Endothelial cell of umbilical vein (primary cell): ENCODE measurements at regions of chr7 and their contacts with region 1.

Region 1: GRCh38 chr7:129218514-129219062 is 6.2 kb upstream of the AHCYL2 start:
- DNase-seq: peak; percentile 80
- H3K4me3 ChIP-seq: no peak overlapping the region
- H3K27ac ChIP-seq: no peak overlapping the region
- H3K4me1 ChIP-seq: peaks cover 7% of the 10 kb centered on the region
- H3K27me3 ChIP-seq: peaks cover 0 to 2% of the 10 kb centered on the region in 2 experiments
- CTCF ChIP-seq: peak; percentile 79 to 84
- POLR2A ChIP-seq: no peak

Region 2: DNA sequence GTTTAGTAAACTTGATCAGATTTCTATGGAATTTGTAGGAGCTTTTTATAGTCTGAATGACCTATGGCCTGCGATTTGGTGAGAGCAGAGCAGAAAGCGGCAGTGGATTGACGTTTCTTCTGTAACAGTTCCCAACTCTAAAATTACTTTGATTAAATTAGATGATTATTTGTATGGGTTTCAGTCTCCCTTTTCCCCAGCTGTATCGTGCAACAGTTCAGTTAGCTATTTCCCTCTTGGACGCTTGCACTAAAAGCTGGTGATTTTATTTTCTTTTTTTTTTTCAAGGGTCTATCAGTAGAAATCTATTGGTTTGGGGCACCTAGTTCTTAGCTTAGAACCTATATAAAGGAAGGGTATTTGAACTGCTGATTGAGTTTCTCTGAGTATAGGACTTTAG is 13.1 kb after region 1 on chr7:
- CTCF ChIA-PET with region 1: interaction called, 14 read pairs
- POLR2A ChIA-PET with region 1: no interaction called
- dilution Hi-C with region 1: no loop called
- intact Hi-C with region 1: no loop called
- DNase-seq: no peak
- H3K4me3 ChIP-seq: no peak overlapping the region
- H3K27ac ChIP-seq: no peak overlapping the region
- H3K4me1 ChIP-seq: no peaks in the 10 kb centered on the region
- H3K27me3 ChIP-seq: no peaks in the 10 kb centered on the region
- CTCF ChIP-seq: no peak
- POLR2A ChIP-seq: no peak

Region 3: GRCh38 chr7:129285111-129285510 is 66.5 kb after region 1 on chr7:
- CTCF ChIA-PET with region 1: interaction called, 23 read pairs
- POLR2A ChIA-PET with region 1: no interaction called
- dilution Hi-C with region 1: no loop called
- intact Hi-C with region 1: no loop called
- DNase-seq: no peak
- H3K4me3 ChIP-seq: no peak overlapping the region
- H3K27ac ChIP-seq: no peak overlapping the region
- H3K4me1 ChIP-seq: peaks cover 21% of the 10 kb centered on the region
- H3K27me3 ChIP-seq: no peaks in the 10 kb centered on the region
- CTCF ChIP-seq: no peak
- POLR2A ChIP-seq: no peak

Region 4: GRCh38 chr7:129332284-129333035 is 113.9 kb after region 1 on chr7:
- CTCF ChIA-PET with region 1: interaction called, 15 read pairs
- POLR2A ChIA-PET with region 1: no interaction called
- dilution Hi-C with region 1: no loop called
- intact Hi-C with region 1: no loop called
- DNase-seq: peak; percentile 58
- H3K4me3 ChIP-seq: no peak overlapping the region
- H3K27ac ChIP-seq: peak overlapping the region; percentile 38
- H3K4me1 ChIP-seq: peaks cover 5% of the 10 kb centered on the region
- H3K27me3 ChIP-seq: no peaks in the 10 kb centered on the region
- CTCF ChIP-seq: no peak
- POLR2A ChIP-seq: no peak

Region 5: DNA sequence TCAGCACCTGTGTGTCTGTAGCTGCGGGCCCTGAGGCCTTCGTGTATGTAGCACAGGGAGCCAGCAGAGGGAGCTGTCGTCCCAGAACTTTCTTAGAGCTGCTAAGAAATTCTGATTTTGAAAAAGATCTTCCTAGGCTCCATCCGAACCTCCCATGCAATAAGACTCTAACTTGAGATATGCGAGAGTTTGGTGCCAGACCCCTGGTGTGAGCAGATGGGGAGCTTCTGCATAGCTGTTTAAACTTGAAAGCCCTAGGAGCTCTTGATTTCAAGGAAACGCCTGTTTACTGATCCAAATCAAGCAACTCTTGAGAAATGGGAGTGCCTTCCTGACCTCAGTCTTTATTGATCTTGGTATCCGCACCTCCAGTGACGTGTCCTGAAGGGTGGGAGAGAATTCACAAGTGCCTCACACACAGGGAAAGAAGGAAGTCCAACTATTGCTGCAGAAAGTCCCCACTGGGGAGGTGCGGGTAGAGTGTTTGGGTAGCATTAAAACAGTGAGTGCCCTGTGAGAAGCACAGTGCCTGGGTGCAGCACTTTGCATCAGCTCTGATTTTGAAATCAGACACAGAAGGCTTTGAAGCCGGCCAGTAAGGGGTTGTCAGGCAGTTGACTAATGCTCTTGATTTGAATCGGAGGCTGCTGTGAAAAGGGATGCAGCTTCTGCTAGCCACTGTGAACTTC is 149.3 kb after region 1 on chr7:
- CTCF ChIA-PET with region 1: interaction called, 45 read pairs
- POLR2A ChIA-PET with region 1: no interaction called
- dilution Hi-C with region 1: no loop called
- intact Hi-C with region 1: loop called (anchors 1 kb)
- DNase-seq: peak; percentile 77
- H3K4me3 ChIP-seq: no peak overlapping the region
- H3K27ac ChIP-seq: no peak overlapping the region
- H3K4me1 ChIP-seq: peaks cover 4% of the 10 kb centered on the region
- H3K27me3 ChIP-seq: no peaks in the 10 kb centered on the region
- CTCF ChIP-seq: peak; percentile 85 to 89
- POLR2A ChIP-seq: no peak

Region 6: DNA sequence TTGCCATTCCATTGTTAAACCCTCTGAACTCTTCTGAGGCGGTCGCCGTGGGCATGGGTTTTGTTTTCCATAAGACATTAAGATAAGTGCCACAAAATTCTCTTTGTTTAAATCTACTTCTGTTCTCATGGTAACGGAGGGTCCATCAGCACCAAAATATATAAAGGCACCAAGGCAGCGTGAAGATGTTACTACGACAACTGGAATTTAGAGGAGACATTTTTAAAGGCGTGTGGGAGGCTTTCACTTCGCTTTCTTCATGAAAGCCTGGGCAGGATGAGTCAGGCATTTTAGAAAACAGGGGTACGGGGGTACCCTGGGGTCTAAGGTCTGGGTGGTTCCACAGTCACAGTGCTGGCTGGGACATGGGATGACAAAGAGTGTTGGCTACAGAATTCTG is 317.7 kb after region 1 on chr7:
- CTCF ChIA-PET with region 1: no interaction called
- POLR2A ChIA-PET with region 1: no interaction called
- dilution Hi-C with region 1: no loop called
- intact Hi-C with region 1: no loop called
- DNase-seq: no peak
- H3K4me3 ChIP-seq: no peak overlapping the region
- H3K27ac ChIP-seq: no peak overlapping the region
- H3K4me1 ChIP-seq: no peaks in the 10 kb centered on the region
- H3K27me3 ChIP-seq: no peaks in the 10 kb centered on the region
- CTCF ChIP-seq: no peak
- POLR2A ChIP-seq: no peak

Region 7: DNA sequence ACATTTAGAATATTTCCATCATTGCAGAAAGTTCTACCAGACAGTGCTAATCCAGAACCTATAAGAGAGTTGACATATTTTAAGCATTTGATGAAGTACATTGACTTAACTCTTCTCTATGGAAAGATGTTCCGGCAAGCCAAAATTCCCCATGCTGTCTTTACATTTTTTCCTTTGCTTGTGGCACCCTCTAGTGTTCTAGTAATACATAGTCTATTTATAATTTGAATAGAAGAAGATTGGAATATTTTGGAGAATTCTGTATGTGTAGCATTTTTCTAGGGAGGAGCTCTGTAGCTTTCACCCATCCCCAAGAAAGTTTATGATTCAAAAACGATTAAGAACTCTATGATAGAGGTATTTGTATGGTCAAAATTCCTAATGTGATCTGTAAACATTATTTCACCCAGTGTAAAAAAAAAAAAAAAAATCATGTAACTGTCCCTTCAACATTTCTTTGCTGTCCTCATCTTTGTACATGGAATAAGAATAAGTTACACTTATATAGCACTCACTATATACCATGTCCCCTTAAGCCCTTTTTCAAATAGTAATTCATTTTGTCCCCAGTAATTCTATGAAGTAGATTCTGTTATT is 426.1 kb after region 1 on chr7:
- CTCF ChIA-PET with region 1: interaction called, 24 read pairs
- POLR2A ChIA-PET with region 1: no interaction called
- dilution Hi-C with region 1: no loop called
- intact Hi-C with region 1: loop called (anchors 1 kb)
- DNase-seq: peak; percentile 66
- H3K4me3 ChIP-seq: no peak overlapping the region
- H3K27ac ChIP-seq: no peak overlapping the region
- H3K4me1 ChIP-seq: peaks cover 16% of the 10 kb centered on the region
- H3K27me3 ChIP-seq: no peaks in the 10 kb centered on the region
- CTCF ChIP-seq: peak in 1 of 2 donors; percentile 15
- POLR2A ChIP-seq: no peak